Endothelial cell of umbilical vein (primary cell): ENCODE measurements at regions of chr13 and their contacts with region 1.

Region 1: GRCh38 chr13:27620377-27621115 is at the start of gene LNX2:
- DNase-seq: peak; percentile 97
- H3K4me3 ChIP-seq: peak within 1 kb of the TSS; percentile 65 to 90 (median 90)
- H3K27ac ChIP-seq: peak within 1 kb of the TSS; percentile 75
- H3K4me1 ChIP-seq: peaks cover 17% of the 10 kb centered on the region
- H3K27me3 ChIP-seq: no peaks in the 10 kb centered on the region
- CTCF ChIP-seq: no peak
- POLR2A ChIP-seq: peak; percentile 22
- total RNA-seq, gene LNX2: 9.1 and 9.9 TPM in 2 replicates

Region 2: GRCh38 chr13:27339299-27339698 is 281.2 kb before region 1 on chr13:
- CTCF ChIA-PET with region 1: no interaction called
- POLR2A ChIA-PET with region 1: no interaction called
- dilution Hi-C with region 1: no loop called
- intact Hi-C with region 1: no loop called
- DNase-seq: peak; percentile 58
- H3K4me3 ChIP-seq: no peak overlapping the region
- H3K27ac ChIP-seq: no peak overlapping the region
- H3K4me1 ChIP-seq: no peaks in the 10 kb centered on the region
- H3K27me3 ChIP-seq: peaks cover 3 to 6% of the 10 kb centered on the region in 2 experiments
- CTCF ChIP-seq: peak; percentile 45 to 77
- POLR2A ChIP-seq: no peak

Region 3: DNA sequence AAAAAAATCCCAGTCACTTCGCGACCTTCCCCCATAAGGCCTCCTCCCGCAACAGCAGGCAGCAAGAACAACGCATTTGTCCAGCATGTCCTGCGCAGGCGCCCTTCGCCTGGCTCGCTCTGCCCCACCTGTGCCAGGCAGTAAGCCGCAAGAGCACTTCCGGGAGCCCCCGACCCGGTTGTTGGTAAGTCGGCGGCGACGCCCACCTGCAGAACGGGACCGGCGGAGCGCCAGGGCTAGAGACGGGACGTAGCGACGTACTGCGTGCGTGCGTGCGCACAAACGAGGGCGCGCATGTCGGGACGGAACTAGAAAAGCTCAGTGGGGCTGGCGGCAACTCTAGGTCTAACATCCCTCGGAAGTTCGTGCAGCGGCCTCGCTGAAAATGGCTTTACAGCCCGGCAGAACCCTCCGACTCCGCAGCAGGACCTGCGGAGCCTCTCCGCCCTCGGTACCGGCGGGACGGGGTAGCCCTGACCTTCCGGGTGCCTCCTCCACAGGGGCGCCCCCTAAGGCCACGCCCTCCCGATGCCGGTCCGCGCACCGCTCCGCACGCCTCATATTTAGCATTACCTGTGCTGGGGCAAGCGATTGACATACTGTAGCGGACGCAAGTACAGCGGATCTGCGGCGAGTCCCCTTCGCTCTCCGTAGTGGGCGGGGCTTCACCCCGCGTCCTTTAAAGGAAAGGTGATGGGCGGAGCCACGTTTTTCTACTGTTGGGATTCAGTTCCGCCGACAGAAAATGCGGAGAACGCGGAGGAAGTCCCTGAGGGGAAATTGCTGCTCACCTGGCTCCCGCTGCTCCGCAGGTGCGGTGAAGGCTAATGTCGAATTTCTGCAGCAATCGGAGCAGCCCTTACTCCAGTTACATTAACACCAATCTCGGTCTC is 170.4 kb before region 1 on chr13 and contains the start of gene MTIF3:
- CTCF ChIA-PET with region 1: no interaction called
- POLR2A ChIA-PET with region 1: interaction called, 3 read pairs
- dilution Hi-C with region 1: no loop called
- intact Hi-C with region 1: loop called (anchors 5 kb)
- DNase-seq: peak; percentile 92
- H3K4me3 ChIP-seq: peak within 1 kb of the TSS; percentile 68 to 90 (median 82)
- H3K27ac ChIP-seq: peak within 1 kb of the TSS; percentile 55
- H3K4me1 ChIP-seq: peaks cover 21% of the 10 kb centered on the region
- H3K27me3 ChIP-seq: peaks cover 7 to 20% of the 10 kb centered on the region in 2 experiments
- CTCF ChIP-seq: no peak
- POLR2A ChIP-seq: peak; percentile 77
- total RNA-seq, gene MTIF3: 23.5 and 36.1 TPM in 2 replicates

Region 4: GRCh38 chr13:27556109-27556508 is 64.4 kb before region 1 on chr13:
- CTCF ChIA-PET with region 1: interaction called, 23 read pairs
- POLR2A ChIA-PET with region 1: no interaction called
- dilution Hi-C with region 1: no loop called
- intact Hi-C with region 1: loop called (anchors 1 kb)
- DNase-seq: peak; percentile 93
- H3K4me3 ChIP-seq: no peak overlapping the region
- H3K27ac ChIP-seq: no peak overlapping the region
- H3K4me1 ChIP-seq: peaks cover 9% of the 10 kb centered on the region
- H3K27me3 ChIP-seq: no peaks in the 10 kb centered on the region
- CTCF ChIP-seq: peak; percentile 26 to 53
- POLR2A ChIP-seq: no peak

Region 5: DNA sequence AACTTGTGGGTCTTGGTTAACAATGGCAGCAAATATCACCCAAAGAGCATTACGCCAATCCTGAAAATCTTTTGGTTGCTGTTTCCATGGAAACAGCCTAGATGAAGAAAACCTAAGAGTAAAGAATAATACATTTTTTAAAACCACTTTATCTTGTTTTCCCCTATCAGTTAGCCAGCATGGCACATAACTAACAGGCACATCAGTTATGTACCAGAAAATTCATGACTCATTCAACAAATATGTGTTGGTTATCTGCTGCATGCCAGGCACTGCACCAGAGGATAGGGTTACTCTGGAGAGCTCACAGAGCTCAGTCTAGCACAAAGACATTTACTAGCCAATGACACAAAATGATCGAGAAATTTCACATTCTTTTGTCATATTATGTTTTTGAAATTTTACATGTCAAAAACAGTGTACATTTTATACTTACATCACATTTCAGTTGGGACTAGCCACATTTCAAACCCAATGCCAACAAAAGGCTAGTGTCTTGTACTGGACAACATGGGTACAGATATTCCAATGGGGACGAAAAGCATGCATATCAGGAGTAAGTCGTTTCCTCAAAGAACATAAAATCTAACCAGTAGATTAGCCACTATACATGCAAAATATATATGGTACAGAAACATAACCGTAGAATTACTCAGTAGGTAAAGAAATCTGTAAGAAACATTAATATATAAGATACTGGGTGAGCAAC is 20.5 kb before region 1 on chr13:
- CTCF ChIA-PET with region 1: interaction called, 3 read pairs
- POLR2A ChIA-PET with region 1: interaction called, 3 read pairs
- dilution Hi-C with region 1: no loop called
- intact Hi-C with region 1: loop called (anchors 1 kb)
- DNase-seq: peak; percentile 70
- H3K4me3 ChIP-seq: no peak overlapping the region
- H3K27ac ChIP-seq: peak overlapping the region; percentile 39
- H3K4me1 ChIP-seq: peaks cover 16% of the 10 kb centered on the region
- H3K27me3 ChIP-seq: no peaks in the 10 kb centered on the region
- CTCF ChIP-seq: no peak
- POLR2A ChIP-seq: no peak

Region 6: GRCh38 chr13:27792393-27793218 is 172.1 kb after region 1 on chr13 and contains the start of gene GSX1:
- CTCF ChIA-PET with region 1: no interaction called
- POLR2A ChIA-PET with region 1: no interaction called
- dilution Hi-C with region 1: no loop called
- intact Hi-C with region 1: loop called (anchors 10 kb)
- DNase-seq: peak; percentile 67
- H3K4me3 ChIP-seq: peak within 1 kb of the TSS in 1 of 3 experiments; percentile 8
- H3K27ac ChIP-seq: no peak within 1 kb of the TSS
- H3K4me1 ChIP-seq: no peaks in the 10 kb centered on the region
- H3K27me3 ChIP-seq: peaks cover 81 to 94% of the 10 kb centered on the region in 2 experiments
- CTCF ChIP-seq: no peak
- POLR2A ChIP-seq: no peak
- total RNA-seq, gene GSX1: not detected in 2 replicates